Posterior vena cava (tissue), 2 donors: ENCODE measurements at regions of chr1 and their contacts with region 1.

Region 1: DNA sequence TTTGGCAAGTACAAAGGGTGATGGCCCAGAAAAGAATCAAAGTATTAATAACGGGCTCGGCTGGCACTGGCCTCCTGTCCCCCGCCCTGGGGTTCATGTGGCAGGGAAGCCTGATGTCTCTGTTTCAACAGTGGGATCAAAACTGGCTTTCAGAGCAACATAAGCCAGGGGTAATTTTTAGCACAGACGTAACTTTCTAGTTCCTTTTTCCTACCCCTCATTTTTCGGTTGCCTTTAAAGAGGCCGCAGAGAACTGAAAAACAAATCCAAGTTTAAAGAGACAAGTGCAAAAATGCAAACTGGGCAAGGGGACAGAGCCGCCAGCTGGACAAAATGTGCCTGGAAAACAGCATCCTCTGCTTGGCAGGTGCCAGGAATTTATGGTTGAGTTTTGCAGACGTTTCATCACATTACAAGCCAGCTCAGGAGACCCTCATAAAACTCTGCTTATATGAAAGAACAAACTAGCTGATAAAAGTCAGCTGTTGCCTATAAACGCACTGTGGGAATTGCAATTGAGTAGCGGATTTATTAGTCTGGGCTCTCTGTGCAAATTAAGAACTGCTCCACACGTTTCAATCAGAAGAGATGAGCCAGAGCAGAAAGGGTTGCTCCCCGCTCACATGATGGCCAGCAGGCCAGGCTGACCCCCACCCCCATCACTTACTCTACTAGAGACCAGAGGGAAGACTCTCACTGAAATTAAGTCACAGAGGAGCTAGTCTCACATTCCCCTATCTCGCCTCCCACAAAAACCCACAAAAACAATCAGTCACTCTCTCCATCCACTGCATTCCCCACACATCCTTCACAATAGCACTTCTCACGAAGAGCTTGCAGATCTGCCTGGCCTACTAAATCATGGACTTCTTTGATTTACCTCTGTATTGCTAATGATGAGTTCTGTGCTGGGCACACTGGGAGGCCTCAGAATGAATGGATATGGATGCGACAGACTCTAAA is 15.8 kb upstream of the CDCA8 start:
- DNase-seq: peak; percentile 45

Region 2: GRCh38 chr1:37612200-37612599 is 64.4 kb before region 1 on chr1:
- intact Hi-C with region 1: loop called (anchors 5 to 10 kb)
- DNase-seq: no peak

Region 3: DNA sequence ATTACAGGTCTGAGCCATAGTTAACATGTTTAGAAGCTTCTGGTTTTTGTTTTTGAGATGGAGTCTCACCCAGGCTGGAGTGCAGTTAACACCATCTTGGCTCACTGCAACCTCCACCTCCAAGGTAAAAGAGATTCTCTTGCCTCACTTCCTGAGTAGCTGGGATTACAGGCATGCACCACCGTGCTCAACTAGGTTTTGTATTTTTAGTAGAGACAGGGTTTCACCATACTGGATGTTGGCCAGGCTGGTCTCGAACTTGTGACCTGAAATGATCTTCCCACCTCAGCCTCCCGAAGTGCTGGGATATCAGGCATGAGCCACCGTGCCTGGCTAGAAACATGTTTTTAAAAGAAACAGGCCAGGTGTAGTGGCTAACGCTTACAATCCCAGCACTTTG is 1360.1 kb after region 1 on chr1:
- intact Hi-C with region 1: loop called in 1 of 2 experiments (anchors 5 kb)
- DNase-seq: no peak